ENCODE measurements at regions of chr1 and their contacts with region 1.

Region 1: GRCh38 chr1:240611619-240612480 is at the start of gene GREM2:
- DNase-seq: peak in 5 of 9 donors; percentile 16 to 39 (median 18)
- ATAC-seq: peak; percentile 69
- H3K4me3 ChIP-seq: peak within 1 kb of the TSS; percentile 69
- H3K4me3 Mint-ChIP-seq: peak within 1 kb of the TSS; percentile 80 to 98 (median 89)
- H3K27ac ChIP-seq: peak within 1 kb of the TSS; percentile 11
- H3K27ac Mint-ChIP-seq: peak within 1 kb of the TSS in 8 of 9 donors; percentile 32 to 87 (median 71)
- H3K4me1 ChIP-seq: peaks cover 11 to 16% of the 10 kb centered on the region in 2 donors
- H3K4me1 Mint-ChIP-seq: peaks cover 18 to 35% (median 29%) of the 10 kb centered on the region in 7 donors
- H3K27me3 ChIP-seq: no peaks in the 10 kb centered on the region
- H3K27me3 Mint-ChIP-seq: peaks cover 14 to 69% (median 45%) of the 10 kb centered on the region in 5 donors
- total RNA-seq, gene GREM2: 0.31 to 5.2 (median 0.75) TPM

Region 2: DNA sequence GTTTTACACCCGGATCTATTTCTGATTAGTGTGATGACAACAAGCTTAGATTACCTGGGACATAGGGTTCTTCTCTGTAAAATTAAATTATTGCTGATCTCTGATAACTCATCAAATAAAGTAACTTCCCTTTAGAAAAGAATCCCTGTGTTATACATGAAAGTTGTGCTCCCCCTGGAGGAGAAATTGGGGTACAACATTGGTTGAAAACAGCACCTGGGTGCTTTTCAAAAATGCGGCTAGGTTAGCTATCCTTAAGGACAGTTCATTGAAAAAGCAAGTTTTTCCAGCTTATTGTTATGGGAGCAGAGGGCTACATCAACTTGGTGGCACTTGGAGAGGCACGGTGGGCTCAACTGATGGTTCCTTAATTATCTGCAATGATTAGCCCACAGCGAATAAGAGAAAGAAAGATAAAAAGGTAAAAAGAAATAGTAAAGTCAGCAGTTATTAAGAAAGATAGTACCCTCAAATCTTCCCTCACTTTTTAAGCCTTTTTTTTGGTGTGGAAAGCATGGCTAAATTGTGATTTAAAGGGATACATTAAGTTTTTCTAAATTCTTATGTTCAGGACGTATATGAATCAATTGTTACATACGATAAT is 422.4 kb before region 1 on chr1:
- CTCF ChIA-PET with region 1: no interaction called
- POLR2A ChIA-PET with region 1: no interaction called
- intact Hi-C with region 1: loop called in 1 of 2 experiments (anchors 10 kb)
- DNase-seq: peak in 2 of 9 donors; percentile 8 to 11
- ATAC-seq: peak; percentile 36
- H3K4me3 ChIP-seq: no peak overlapping the region
- H3K4me3 Mint-ChIP-seq: peak overlapping the region in 7 of 10 donors; percentile 2 to 66 (median 32)
- H3K27ac ChIP-seq: no peak overlapping the region
- H3K27ac Mint-ChIP-seq: no peak overlapping the region
- H3K4me1 ChIP-seq: no peaks in the 10 kb centered on the region
- H3K4me1 Mint-ChIP-seq: peaks cover 0 to 6% (median 3%) of the 10 kb centered on the region in 7 donors
- H3K27me3 ChIP-seq: no peaks in the 10 kb centered on the region
- H3K27me3 Mint-ChIP-seq: peaks cover 2 to 29% (median 15%) of the 10 kb centered on the region in 5 donors

Region 3: GRCh38 chr1:240455228-240455821 is 156.5 kb before region 1 on chr1:
- CTCF ChIA-PET with region 1: interaction called, 9 read pairs
- POLR2A ChIA-PET with region 1: no interaction called
- intact Hi-C with region 1: loop called (anchors 1 kb)
- DNase-seq: peak in 2 of 9 donors; percentile 7 to 14
- ATAC-seq: peak; percentile 53
- H3K4me3 ChIP-seq: no peak overlapping the region
- H3K4me3 Mint-ChIP-seq: no peak overlapping the region
- H3K27ac ChIP-seq: no peak overlapping the region
- H3K27ac Mint-ChIP-seq: no peak overlapping the region
- H3K4me1 ChIP-seq: no peaks in the 10 kb centered on the region
- H3K4me1 Mint-ChIP-seq: no peaks in the 10 kb centered on the region
- H3K27me3 ChIP-seq: no peaks in the 10 kb centered on the region
- H3K27me3 Mint-ChIP-seq: no peaks in the 10 kb centered on the region

Region 4: GRCh38 chr1:240575981-240576662 is 35.7 kb before region 1 on chr1:
- CTCF ChIA-PET with region 1: no interaction called
- POLR2A ChIA-PET with region 1: no interaction called
- intact Hi-C with region 1: loop called (anchors 1 to 2 kb)
- DNase-seq: peak in 7 of 9 donors; percentile 13 to 69 (median 58)
- ATAC-seq: peak; percentile 93
- H3K4me3 ChIP-seq: peak overlapping the region; percentile 14
- H3K4me3 Mint-ChIP-seq: peak overlapping the region; percentile 38 to 87 (median 76)
- H3K27ac ChIP-seq: peak overlapping the region; percentile 55
- H3K27ac Mint-ChIP-seq: peak overlapping the region in 8 of 9 donors; percentile 75 to 91 (median 83)
- H3K4me1 ChIP-seq: peaks cover 5 to 11% of the 10 kb centered on the region in 2 donors
- H3K4me1 Mint-ChIP-seq: peaks cover 7 to 28% (median 18%) of the 10 kb centered on the region in 7 donors
- H3K27me3 ChIP-seq: no peaks in the 10 kb centered on the region
- H3K27me3 Mint-ChIP-seq: peaks cover 0 to 3% (median 0%) of the 10 kb centered on the region in 5 donors

Region 5: DNA sequence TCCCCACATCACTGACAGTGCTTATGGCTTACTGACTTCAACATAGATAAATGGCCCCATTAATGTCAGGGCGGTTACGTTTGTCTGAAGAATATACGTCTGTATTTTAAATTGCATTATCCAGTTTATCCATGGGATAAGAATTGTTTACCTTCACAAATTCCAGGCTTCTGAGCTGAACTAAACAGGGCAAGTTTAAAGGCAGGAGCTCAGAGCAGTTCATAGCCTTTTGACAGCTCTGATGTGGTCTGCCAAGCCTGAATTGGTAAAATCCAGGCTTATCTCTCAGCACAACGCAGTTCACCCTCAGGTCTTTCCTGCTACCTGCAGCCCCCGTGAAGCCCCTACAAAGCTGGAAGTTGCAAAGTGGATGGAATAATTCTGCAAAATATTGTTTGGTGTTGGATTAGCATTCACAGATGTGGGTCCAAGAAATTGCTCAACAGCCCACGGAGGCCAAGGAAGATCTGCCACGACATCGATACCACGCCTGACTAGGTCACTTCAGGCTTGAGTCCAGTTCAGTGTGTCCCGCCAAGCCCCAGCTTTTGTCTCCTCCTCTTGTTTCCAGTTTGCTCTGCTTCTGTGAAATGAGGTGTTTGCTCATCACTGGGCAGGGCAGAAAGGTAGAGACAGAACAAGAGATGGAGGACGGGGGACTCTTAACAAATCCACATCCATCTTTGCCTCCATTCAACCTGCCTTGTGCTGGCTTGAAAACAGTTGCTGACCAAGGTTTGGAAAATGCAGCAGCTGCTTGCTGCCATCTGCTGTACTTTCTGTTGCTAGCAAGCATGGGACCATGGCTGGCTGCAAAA is 79.9 kb after region 1 on chr1:
- CTCF ChIA-PET with region 1: no interaction called
- POLR2A ChIA-PET with region 1: no interaction called
- intact Hi-C with region 1: loop called (anchors 2 to 10 kb)
- DNase-seq: no peak
- ATAC-seq: peak; percentile 40
- H3K4me3 ChIP-seq: no peak overlapping the region
- H3K4me3 Mint-ChIP-seq: no peak overlapping the region
- H3K27ac ChIP-seq: no peak overlapping the region
- H3K27ac Mint-ChIP-seq: no peak overlapping the region
- H3K4me1 ChIP-seq: no peaks in the 10 kb centered on the region
- H3K4me1 Mint-ChIP-seq: peaks cover 4 to 13% (median 9%) of the 10 kb centered on the region in 7 donors
- H3K27me3 ChIP-seq: no peaks in the 10 kb centered on the region
- H3K27me3 Mint-ChIP-seq: peaks cover 0 to 4% (median 4%) of the 10 kb centered on the region in 5 donors

Measured in naive thymus-derived CD4-positive, alpha-beta T cell (primary cell).